ENCODE measurements at regions of chr15 and their contacts with region 1.

Region 1: GRCh38 chr15:73633111-73633990 is at the start of gene NPTN:
- DNase-seq: peak; percentile 97 to 98 (median 98)
- H3K4me3 ChIP-seq: peak within 1 kb of the TSS; percentile 68 to 86 (median 85)
- H3K27ac ChIP-seq: peak within 1 kb of the TSS; percentile 52 to 83
- H3K4me1 ChIP-seq: peaks cover 19 to 44% (median 28%) of the 10 kb centered on the region in 4 experiments
- H3K27me3 ChIP-seq: peaks cover 0 to 11% (median 0%) of the 10 kb centered on the region in 5 experiments

Region 2: GRCh38 chr15:73560501-73561117 is 72.7 kb before region 1 on chr15:
- CTCF ChIA-PET with region 1: interaction called, 96 read pairs
- POLR2A ChIA-PET with region 1: no interaction called
- DNase-seq: peak; percentile 77 to 90 (median 87)
- H3K4me3 ChIP-seq: no peak overlapping the region
- H3K27ac ChIP-seq: no peak overlapping the region
- H3K4me1 ChIP-seq: peaks cover 0 to 15% (median 7%) of the 10 kb centered on the region in 4 experiments
- H3K27me3 ChIP-seq: no peaks in the 10 kb centered on the region

Region 3: DNA sequence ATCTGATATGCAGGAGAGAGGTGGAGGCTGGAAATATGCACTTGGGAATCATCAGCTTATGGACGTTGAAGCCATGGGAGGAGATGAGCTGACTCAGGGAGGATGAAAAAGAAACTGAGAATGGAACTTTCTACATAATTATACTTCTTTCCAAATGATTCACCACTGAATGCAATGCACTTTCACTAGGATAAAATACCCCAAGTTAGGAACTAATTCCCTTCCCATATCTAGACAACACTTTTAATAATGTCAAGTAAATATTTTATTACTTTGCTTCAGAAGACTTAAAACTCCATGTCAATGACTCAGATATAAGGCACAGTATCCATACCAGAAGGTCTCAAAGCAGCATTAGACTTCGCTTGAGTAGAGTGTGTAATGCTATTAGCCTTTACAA is 24.4 kb before region 1 on chr15:
- CTCF ChIA-PET with region 1: interaction called, 14 read pairs
- POLR2A ChIA-PET with region 1: no interaction called
- DNase-seq: no peak
- H3K4me3 ChIP-seq: no peak overlapping the region
- H3K27ac ChIP-seq: no peak overlapping the region
- H3K4me1 ChIP-seq: peaks cover 0 to 18% (median 9%) of the 10 kb centered on the region in 4 experiments
- H3K27me3 ChIP-seq: no peaks in the 10 kb centered on the region

Region 4: GRCh38 chr15:73650416-73651126 is 17.2 kb after region 1 on chr15:
- CTCF ChIA-PET with region 1: interaction called, 38 read pairs
- POLR2A ChIA-PET with region 1: no interaction called
- DNase-seq: peak; percentile 72 to 94 (median 90)
- H3K4me3 ChIP-seq: peak overlapping the region in 1 of 7 experiments; percentile 5
- H3K27ac ChIP-seq: peak overlapping the region; percentile 16 to 45
- H3K4me1 ChIP-seq: peaks cover 0 to 19% (median 16%) of the 10 kb centered on the region in 4 experiments
- H3K27me3 ChIP-seq: no peaks in the 10 kb centered on the region

Region 5: GRCh38 chr15:73697033-73697467 is 63.7 kb after region 1 on chr15:
- CTCF ChIA-PET with region 1: interaction called, 287 read pairs
- POLR2A ChIA-PET with region 1: interaction called, 5 read pairs
- DNase-seq: peak; percentile 96 to 100 (median 99)
- H3K4me3 ChIP-seq: peak overlapping the region in 2 of 7 experiments; percentile 23 to 40
- H3K27ac ChIP-seq: no peak overlapping the region
- H3K4me1 ChIP-seq: peaks cover 0 to 45% (median 33%) of the 10 kb centered on the region in 4 experiments
- H3K27me3 ChIP-seq: peaks cover 0 to 35% (median 5%) of the 10 kb centered on the region in 5 experiments

Region 6: GRCh38 chr15:74275957-74276356 is 642.6 kb after region 1 on chr15:
- CTCF ChIA-PET with region 1: no interaction called
- POLR2A ChIA-PET with region 1: no interaction called
- DNase-seq: no peak
- H3K4me3 ChIP-seq: no peak overlapping the region
- H3K27ac ChIP-seq: no peak overlapping the region
- H3K4me1 ChIP-seq: no peaks in the 10 kb centered on the region
- H3K27me3 ChIP-seq: peaks cover 0 to 50% (median 15%) of the 10 kb centered on the region in 5 experiments

Measured in common myeloid progenitor, CD34-positive (primary cell).